ENCODE measurements at regions of chr4 and their contacts with region 1.

Region 1: GRCh38 chr4:75490155-75490554 is 24.0 kb downstream of the RCHY1 start:
- DNase-seq: no peak
- H3K4me3 ChIP-seq: no peak overlapping the region
- H3K27ac ChIP-seq: no peak overlapping the region
- H3K4me1 ChIP-seq: no peaks in the 10 kb centered on the region
- H3K27me3 ChIP-seq: no peaks in the 10 kb centered on the region
- CTCF ChIP-seq: no peak
- EP300 ChIP-seq: no peak
- POLR2A ChIP-seq: no peak

Region 2: DNA sequence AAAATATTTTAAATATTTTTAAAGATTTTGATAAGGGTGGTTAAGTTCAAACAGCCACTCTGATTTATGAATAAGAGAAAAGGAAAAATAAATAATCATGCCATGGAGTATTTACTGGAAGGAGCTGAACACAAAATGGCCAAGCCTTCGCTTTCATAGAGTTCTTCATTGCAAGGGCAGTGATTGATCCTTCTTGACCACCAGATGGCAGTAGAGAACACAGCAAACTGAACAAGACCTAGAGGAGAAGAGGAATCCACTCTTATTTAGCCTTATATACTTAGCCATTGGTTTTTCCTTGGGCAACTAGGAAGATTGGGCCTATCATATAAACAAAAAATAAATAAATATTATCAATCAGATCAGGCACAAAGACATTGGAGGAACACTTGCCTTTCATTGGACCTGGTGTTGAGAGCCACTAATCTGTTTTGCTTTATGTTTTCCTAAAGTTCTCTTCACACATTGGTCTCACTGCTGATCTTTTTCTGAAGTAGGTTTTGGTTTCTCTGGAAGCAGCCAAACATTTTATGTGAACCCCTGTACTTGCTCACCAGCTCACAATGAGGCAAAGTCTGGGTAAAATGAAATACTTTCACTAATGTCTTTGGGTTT is 615.3 kb before region 1 on chr4:
- intact Hi-C with region 1: loop called in 1 of 4 experiments (anchors 5 kb)
- DNase-seq: no peak
- H3K4me3 ChIP-seq: no peak overlapping the region
- H3K27ac ChIP-seq: no peak overlapping the region
- H3K4me1 ChIP-seq: no peaks in the 10 kb centered on the region
- H3K27me3 ChIP-seq: no peaks in the 10 kb centered on the region
- CTCF ChIP-seq: peak; percentile 39 to 62 (median 46)
- EP300 ChIP-seq: no peak
- POLR2A ChIP-seq: no peak

Measured in ovary (tissue), 10 donors.